PC-3 (cell line): ENCODE measurements at regions of chr7 and their contacts with region 1.

Region 1: GRCh38 chr7:35036361-35037171 is 719 bp downstream of the DPY19L1 start:
- DNase-seq: peak; percentile 40
- ATAC-seq: peak; percentile 10
- H3K4me3 ChIP-seq: peak overlapping the region; percentile 88
- H3K27ac ChIP-seq: peak overlapping the region; percentile 15; the same call in 1 of the 2 replicates
- H3K4me1 ChIP-seq: peaks cover 36% of the 10 kb centered on the region
- H3K27me3 ChIP-seq: no peaks in the 10 kb centered on the region
- CTCF ChIP-seq: no peak

Region 2: GRCh38 chr7:34321000-34321581 is 715.5 kb before region 1 on chr7:
- CTCF ChIA-PET with region 1: interaction called, 20 read pairs
- POLR2A ChIA-PET with region 1: no interaction called
- intact Hi-C with region 1: no loop called
- DNase-seq: peak; percentile 74
- ATAC-seq: peak; percentile 98
- H3K4me3 ChIP-seq: peak overlapping the region; percentile 36; the same call in 1 of the 2 replicates
- H3K27ac ChIP-seq: no peak overlapping the region
- H3K4me1 ChIP-seq: peaks cover 6% of the 10 kb centered on the region
- H3K27me3 ChIP-seq: 0 out of 2 replicates have a peak, but pooled peaks cover 6% of the 10 kb centered on the region
- CTCF ChIP-seq: peak; percentile 94

Region 3: GRCh38 chr7:34759452-34760125 is 277.0 kb before region 1 on chr7:
- CTCF ChIA-PET with region 1: interaction called, 5 read pairs
- POLR2A ChIA-PET with region 1: no interaction called
- intact Hi-C with region 1: loop called (anchors 1 kb)
- DNase-seq: peak; percentile 65
- ATAC-seq: peak; percentile 75
- H3K4me3 ChIP-seq: no peak overlapping the region
- H3K27ac ChIP-seq: no peak overlapping the region
- H3K4me1 ChIP-seq: peaks cover 9% of the 10 kb centered on the region
- H3K27me3 ChIP-seq: no peaks in the 10 kb centered on the region
- CTCF ChIP-seq: peak; percentile 75

Region 4: GRCh38 chr7:34823640-34824258 is 212.8 kb before region 1 on chr7:
- CTCF ChIA-PET with region 1: interaction called, 34 read pairs
- POLR2A ChIA-PET with region 1: no interaction called
- intact Hi-C with region 1: loop called (anchors 1 kb)
- DNase-seq: peak; percentile 67
- ATAC-seq: peak; percentile 72
- H3K4me3 ChIP-seq: no peak overlapping the region
- H3K27ac ChIP-seq: no peak overlapping the region
- H3K4me1 ChIP-seq: no peaks in the 10 kb centered on the region; the same call in 1 of the 2 replicates
- H3K27me3 ChIP-seq: no peaks in the 10 kb centered on the region
- CTCF ChIP-seq: peak; percentile 79

Region 5: GRCh38 chr7:34928560-34928959 is 108.0 kb before region 1 on chr7:
- CTCF ChIA-PET with region 1: interaction called, 14 read pairs
- POLR2A ChIA-PET with region 1: no interaction called
- intact Hi-C with region 1: no loop called
- DNase-seq: no peak
- ATAC-seq: no peak
- H3K4me3 ChIP-seq: no peak overlapping the region
- H3K27ac ChIP-seq: no peak overlapping the region
- H3K4me1 ChIP-seq: no peaks in the 10 kb centered on the region
- H3K27me3 ChIP-seq: no peaks in the 10 kb centered on the region
- CTCF ChIP-seq: no peak

Region 6: GRCh38 chr7:35003679-35004303 is 32.8 kb before region 1 on chr7:
- CTCF ChIA-PET with region 1: interaction called, 6 read pairs
- POLR2A ChIA-PET with region 1: interaction called, 3 read pairs
- intact Hi-C with region 1: loop called (anchors 1 kb)
- DNase-seq: peak; percentile 94
- ATAC-seq: peak; percentile 89
- H3K4me3 ChIP-seq: no peak overlapping the region
- H3K27ac ChIP-seq: peak overlapping the region; percentile 98
- H3K4me1 ChIP-seq: peaks cover 23% of the 10 kb centered on the region
- H3K27me3 ChIP-seq: no peaks in the 10 kb centered on the region
- CTCF ChIP-seq: no peak

Region 7: DNA sequence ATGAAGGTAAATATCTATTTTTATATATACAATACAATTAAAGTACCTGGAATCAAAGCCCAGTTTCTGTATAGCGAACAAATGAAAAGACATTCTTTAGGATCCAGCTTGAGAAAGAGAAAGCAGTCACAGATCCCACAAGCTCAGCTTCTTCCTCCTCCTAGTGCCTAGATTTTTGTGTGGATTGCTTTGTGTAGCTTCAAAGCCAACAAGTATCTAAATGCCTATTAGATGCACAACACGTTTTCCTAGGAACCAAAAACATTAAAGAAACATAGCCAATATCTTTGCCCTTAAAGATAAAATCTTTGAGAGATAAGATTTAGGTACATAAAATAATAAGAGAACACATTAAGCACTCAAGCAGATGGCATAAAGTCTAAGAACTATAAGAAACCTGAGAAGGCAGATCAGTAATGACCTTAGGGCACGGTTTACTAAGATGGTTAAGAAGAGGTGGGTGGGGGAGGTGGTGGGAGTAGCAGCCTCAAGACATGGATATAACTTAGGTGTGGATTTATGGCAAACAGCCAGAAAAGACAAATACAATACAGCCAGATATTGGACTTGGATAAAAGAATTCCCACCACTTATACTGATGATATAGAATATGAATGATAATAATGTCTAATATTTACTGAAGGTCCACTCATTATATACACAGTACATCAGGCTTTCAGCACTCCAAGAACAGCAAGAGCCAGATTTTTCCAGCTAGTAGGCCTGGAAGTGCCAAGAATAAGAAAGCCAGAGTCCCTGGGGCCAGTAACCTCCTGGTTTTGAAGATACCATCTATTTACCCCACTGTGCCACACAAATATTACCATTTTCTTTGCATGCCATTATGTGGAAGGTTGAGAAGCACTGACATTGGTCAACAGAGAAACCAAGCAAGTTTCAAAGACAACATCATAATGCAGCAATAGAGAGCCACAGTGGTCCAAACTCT is 11.2 kb before region 1 on chr7:
- CTCF ChIA-PET with region 1: no interaction called
- POLR2A ChIA-PET with region 1: no interaction called
- intact Hi-C with region 1: no loop called
- DNase-seq: peak; percentile 71
- ATAC-seq: peak; percentile 88
- H3K4me3 ChIP-seq: no peak overlapping the region
- H3K27ac ChIP-seq: peak overlapping the region; percentile 89
- H3K4me1 ChIP-seq: peaks cover 34% of the 10 kb centered on the region
- H3K27me3 ChIP-seq: no peaks in the 10 kb centered on the region
- CTCF ChIP-seq: no peak